ENCODE measurements at regions of chr11 and their contacts with region 1.

Region 1: GRCh38 chr11:64742889-64743590 is 902 bp downstream of the RASGRP2 start:
- DNase-seq: peak; percentile 88
- ATAC-seq: peak; percentile 11
- H3K4me3 ChIP-seq: peak overlapping the region; percentile 48 to 99 (median 86)
- H3K4me3 Mint-ChIP-seq: peak overlapping the region; percentile 97
- H3K27ac ChIP-seq: peak overlapping the region; percentile 84 to 91
- H3K27ac Mint-ChIP-seq: peak overlapping the region; percentile 86
- H3K4me1 ChIP-seq: peaks cover 22 to 33% of the 10 kb centered on the region in 2 donors
- H3K4me1 Mint-ChIP-seq: peaks cover 49% of the 10 kb centered on the region
- H3K27me3 ChIP-seq: no peaks in the 10 kb centered on the region
- H3K27me3 Mint-ChIP-seq: no peaks in the 10 kb centered on the region
- CTCF ChIP-seq: peak; percentile 86

Region 2: GRCh38 chr11:64448599-64449556 is 294.2 kb before region 1 on chr11:
- CTCF ChIA-PET with region 1: no interaction called
- POLR2A ChIA-PET with region 1: no interaction called
- intact Hi-C with region 1: loop called (anchors 10 kb)
- DNase-seq: peak; percentile 80
- ATAC-seq: peak; percentile 61
- H3K4me3 ChIP-seq: peak overlapping the region; percentile 52 to 92 (median 55)
- H3K4me3 Mint-ChIP-seq: peak overlapping the region; percentile 94
- H3K27ac ChIP-seq: peak overlapping the region; percentile 39 to 83
- H3K27ac Mint-ChIP-seq: peak overlapping the region; percentile 83
- H3K4me1 ChIP-seq: peaks cover 25 to 34% of the 10 kb centered on the region in 2 donors
- H3K4me1 Mint-ChIP-seq: peaks cover 34% of the 10 kb centered on the region
- H3K27me3 ChIP-seq: no peaks in the 10 kb centered on the region
- H3K27me3 Mint-ChIP-seq: no peaks in the 10 kb centered on the region
- CTCF ChIP-seq: peak; percentile 76

Region 3: GRCh38 chr11:64767344-64768299 is 24.6 kb after region 1 on chr11:
- CTCF ChIA-PET with region 1: interaction called, 280 read pairs
- POLR2A ChIA-PET with region 1: interaction called, 175 read pairs
- intact Hi-C with region 1: loop called (anchors 1 kb)
- DNase-seq: peak; percentile 82
- ATAC-seq: no peak
- H3K4me3 ChIP-seq: no peak overlapping the region
- H3K4me3 Mint-ChIP-seq: peak overlapping the region; percentile 66
- H3K27ac ChIP-seq: peak overlapping the region; percentile 64 to 75
- H3K27ac Mint-ChIP-seq: peak overlapping the region; percentile 92
- H3K4me1 ChIP-seq: peaks cover 85 to 96% of the 10 kb centered on the region in 2 donors
- H3K4me1 Mint-ChIP-seq: peaks cover 91% of the 10 kb centered on the region
- H3K27me3 ChIP-seq: no peaks in the 10 kb centered on the region
- H3K27me3 Mint-ChIP-seq: no peaks in the 10 kb centered on the region
- CTCF ChIP-seq: peak; percentile 90

Region 4: GRCh38 chr11:64787526-64788320 is 44.7 kb after region 1 on chr11:
- CTCF ChIA-PET with region 1: interaction called, 29 read pairs
- POLR2A ChIA-PET with region 1: interaction called, 20 read pairs
- intact Hi-C with region 1: no loop called
- DNase-seq: peak; percentile 73
- ATAC-seq: peak; percentile 83
- H3K4me3 ChIP-seq: no peak overlapping the region
- H3K4me3 Mint-ChIP-seq: no peak overlapping the region
- H3K27ac ChIP-seq: peak overlapping the region; percentile 25 to 56
- H3K27ac Mint-ChIP-seq: peak overlapping the region; percentile 81
- H3K4me1 ChIP-seq: peaks cover 12 to 14% of the 10 kb centered on the region in 2 donors
- H3K4me1 Mint-ChIP-seq: peaks cover 12% of the 10 kb centered on the region
- H3K27me3 ChIP-seq: no peaks in the 10 kb centered on the region
- H3K27me3 Mint-ChIP-seq: no peaks in the 10 kb centered on the region
- CTCF ChIP-seq: peak; percentile 77

Region 5: GRCh38 chr11:64810271-64810890 is 67.3 kb after region 1 on chr11 and contains the start of gene MEN1:
- CTCF ChIA-PET with region 1: interaction called, 5 read pairs
- POLR2A ChIA-PET with region 1: interaction called, 4 read pairs
- intact Hi-C with region 1: loop called (anchors 2 kb)
- DNase-seq: peak; percentile 82
- ATAC-seq: peak; percentile 84
- H3K4me3 ChIP-seq: peak within 1 kb of the TSS; percentile 36 to 99 (median 86)
- H3K4me3 Mint-ChIP-seq: peak within 1 kb of the TSS; percentile 98
- H3K27ac ChIP-seq: peak within 1 kb of the TSS; percentile 63 to 79
- H3K27ac Mint-ChIP-seq: peak within 1 kb of the TSS; percentile 95
- H3K4me1 ChIP-seq: peaks cover 15 to 32% of the 10 kb centered on the region in 2 donors
- H3K4me1 Mint-ChIP-seq: peaks cover 34% of the 10 kb centered on the region
- H3K27me3 ChIP-seq: no peaks in the 10 kb centered on the region
- H3K27me3 Mint-ChIP-seq: no peaks in the 10 kb centered on the region
- CTCF ChIP-seq: no peak
- total RNA-seq, gene MEN1: 46.3 and 48.2 TPM in 2 replicates

Region 6: GRCh38 chr11:64894070-64894796 is 151.2 kb after region 1 on chr11:
- CTCF ChIA-PET with region 1: interaction called, 10 read pairs
- POLR2A ChIA-PET with region 1: no interaction called
- intact Hi-C with region 1: no loop called
- DNase-seq: peak; percentile 91
- ATAC-seq: peak; percentile 98
- H3K4me3 ChIP-seq: no peak overlapping the region
- H3K4me3 Mint-ChIP-seq: no peak overlapping the region
- H3K27ac ChIP-seq: no peak overlapping the region
- H3K27ac Mint-ChIP-seq: peak overlapping the region; percentile 64
- H3K4me1 ChIP-seq: peaks cover 22 to 30% of the 10 kb centered on the region in 2 donors
- H3K4me1 Mint-ChIP-seq: peaks cover 16% of the 10 kb centered on the region
- H3K27me3 ChIP-seq: no peaks in the 10 kb centered on the region
- H3K27me3 Mint-ChIP-seq: no peaks in the 10 kb centered on the region
- CTCF ChIP-seq: peak; percentile 87

Measured in B cell (primary cell).